PC-9 (cell line): ENCODE measurements at regions of chr1 and their contacts with region 1.

Region 1: GRCh38 chr1:218330043-218330623 is 15.0 kb upstream of the TGFB2 start:
- DNase-seq: peak in 1 of 2 experiments; percentile 48
- H3K4me3 ChIP-seq: no peak overlapping the region
- H3K27ac ChIP-seq: no peak overlapping the region
- H3K4me1 ChIP-seq: peaks cover 9% of the 10 kb centered on the region; the same call in 1 of the 2 replicates
- H3K27me3 ChIP-seq: no peaks in the 10 kb centered on the region
- CTCF ChIP-seq: peak; percentile 91

Region 2: GRCh38 chr1:218874313-218874712 is 544.2 kb after region 1 on chr1:
- CTCF ChIA-PET with region 1: no interaction called
- POLR2A ChIA-PET with region 1: no interaction called
- intact Hi-C with region 1: loop called (anchors 10 kb)
- DNase-seq: peak; percentile 11 to 44
- H3K4me3 ChIP-seq: no peak overlapping the region
- H3K27ac ChIP-seq: no peak overlapping the region
- H3K4me1 ChIP-seq: peaks cover 14% of the 10 kb centered on the region; the same call in 1 of the 2 replicates
- H3K27me3 ChIP-seq: no peaks in the 10 kb centered on the region
- CTCF ChIP-seq: no peak

Region 3: GRCh38 chr1:219317762-219318353 is 987.7 kb after region 1 on chr1:
- CTCF ChIA-PET with region 1: no interaction called
- POLR2A ChIA-PET with region 1: no interaction called
- intact Hi-C with region 1: loop called (anchors 10 kb)
- DNase-seq: no peak
- H3K4me3 ChIP-seq: no peak overlapping the region
- H3K27ac ChIP-seq: no peak overlapping the region
- H3K4me1 ChIP-seq: peaks cover 4% of the 10 kb centered on the region; the same call in 1 of the 2 replicates
- H3K27me3 ChIP-seq: no peaks in the 10 kb centered on the region
- CTCF ChIP-seq: no peak

Region 4: GRCh38 chr1:219416594-219417238 is 1086.6 kb after region 1 on chr1:
- CTCF ChIA-PET with region 1: no interaction called
- POLR2A ChIA-PET with region 1: no interaction called
- intact Hi-C with region 1: loop called (anchors 1 kb)
- DNase-seq: peak; percentile 44 to 57
- H3K4me3 ChIP-seq: no peak overlapping the region
- H3K27ac ChIP-seq: no peak overlapping the region
- H3K4me1 ChIP-seq: no peaks in the 10 kb centered on the region
- H3K27me3 ChIP-seq: no peaks in the 10 kb centered on the region
- CTCF ChIP-seq: peak; percentile 71

Region 5: DNA sequence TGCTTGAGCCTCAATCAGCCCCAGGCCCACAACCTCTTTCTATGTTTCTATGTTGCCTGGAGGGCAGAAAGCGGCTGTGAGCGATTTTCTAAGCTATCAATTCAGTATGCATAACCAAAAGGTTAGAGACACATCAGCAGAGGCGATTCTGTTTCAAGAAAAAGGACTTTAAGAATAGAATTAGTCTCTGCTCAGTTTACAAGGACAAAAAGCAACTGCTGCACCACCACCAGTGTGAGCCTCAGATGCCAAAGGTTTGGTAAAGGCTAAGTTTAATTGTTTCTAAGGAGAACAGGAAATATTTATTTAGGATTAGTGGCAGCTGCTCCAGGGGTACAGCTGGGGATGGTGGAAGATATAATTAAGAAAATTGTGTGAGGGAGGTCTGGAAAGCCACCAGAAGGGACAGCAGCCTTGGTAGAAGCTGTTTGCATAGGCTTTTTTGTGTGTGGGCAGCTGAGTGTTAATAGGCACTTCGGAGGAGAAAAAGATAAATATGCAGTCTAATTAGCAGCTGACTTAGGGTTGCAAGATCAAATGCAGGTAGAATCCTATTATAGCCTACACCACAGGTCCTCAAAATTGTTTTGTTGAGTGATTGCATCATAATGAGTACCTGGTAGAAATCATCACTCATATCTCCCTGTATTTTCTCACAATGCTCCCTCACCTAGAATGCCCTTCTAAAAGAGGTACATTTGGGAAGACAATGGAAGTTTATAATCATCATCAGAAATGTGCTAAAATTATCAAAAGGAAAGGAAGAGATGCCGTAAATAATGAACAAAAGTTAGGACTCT is 1247.0 kb after region 1 on chr1:
- CTCF ChIA-PET with region 1: no interaction called
- POLR2A ChIA-PET with region 1: no interaction called
- intact Hi-C with region 1: no loop called
- DNase-seq: no peak
- H3K4me3 ChIP-seq: no peak overlapping the region
- H3K27ac ChIP-seq: no peak overlapping the region
- H3K4me1 ChIP-seq: peaks cover 23% of the 10 kb centered on the region
- H3K27me3 ChIP-seq: no peaks in the 10 kb centered on the region
- CTCF ChIP-seq: no peak

Region 6: GRCh38 chr1:219660666-219661463 is 1330.7 kb after region 1 on chr1:
- CTCF ChIA-PET with region 1: interaction called, 3 read pairs
- POLR2A ChIA-PET with region 1: no interaction called
- intact Hi-C with region 1: loop called (anchors 1 kb)
- DNase-seq: peak in 1 of 2 experiments; percentile 67
- H3K4me3 ChIP-seq: no peak overlapping the region
- H3K27ac ChIP-seq: no peak overlapping the region
- H3K4me1 ChIP-seq: peaks cover 17% of the 10 kb centered on the region; the same call in 1 of the 2 replicates
- H3K27me3 ChIP-seq: no peaks in the 10 kb centered on the region
- CTCF ChIP-seq: peak; percentile 34; the same call in 1 of the 2 replicates